Calu3 (cell line): ENCODE measurements at regions of chrX and their contacts with region 1.

Region 1: DNA sequence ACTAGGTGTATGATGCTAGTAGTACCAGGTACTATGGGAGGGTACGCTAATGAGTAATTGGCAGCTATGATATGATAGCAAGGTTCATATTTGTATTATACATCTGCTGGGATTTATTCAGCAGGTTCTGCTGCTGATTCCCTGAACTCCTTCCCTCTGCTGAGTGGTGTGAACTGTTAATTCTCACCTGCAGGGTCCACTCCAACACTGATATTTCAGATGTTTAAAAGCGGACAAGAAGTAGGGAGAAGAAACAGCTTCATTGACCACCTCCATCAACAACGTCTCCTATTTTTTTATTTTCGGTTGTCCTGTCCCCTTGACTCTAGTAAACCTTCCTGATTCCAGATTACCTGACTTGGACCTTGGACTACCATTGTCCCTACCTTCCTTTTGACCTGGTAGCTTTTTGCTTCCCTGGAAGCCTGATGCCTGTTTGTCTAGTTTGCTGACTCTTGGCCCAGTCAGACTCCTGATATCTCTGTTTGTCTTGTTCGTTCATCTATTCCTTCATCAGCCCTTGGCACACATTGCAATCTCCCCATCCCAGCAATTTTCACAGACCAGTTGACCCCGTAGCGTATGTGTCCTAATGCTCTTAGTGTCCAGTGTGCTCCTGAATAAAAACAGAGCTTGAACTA is 34.0 kb upstream of the RNF128 start:
- DNase-seq: peak; percentile 14
- H3K4me3 Mint-ChIP-seq: peak overlapping the region; percentile 66
- H3K27ac Mint-ChIP-seq: peak overlapping the region; percentile 78
- H3K4me1 Mint-ChIP-seq: peaks cover 28% of the 10 kb centered on the region
- H3K27me3 Mint-ChIP-seq: no peaks in the 10 kb centered on the region
- CTCF ChIP-seq: no peak

Region 2: DNA sequence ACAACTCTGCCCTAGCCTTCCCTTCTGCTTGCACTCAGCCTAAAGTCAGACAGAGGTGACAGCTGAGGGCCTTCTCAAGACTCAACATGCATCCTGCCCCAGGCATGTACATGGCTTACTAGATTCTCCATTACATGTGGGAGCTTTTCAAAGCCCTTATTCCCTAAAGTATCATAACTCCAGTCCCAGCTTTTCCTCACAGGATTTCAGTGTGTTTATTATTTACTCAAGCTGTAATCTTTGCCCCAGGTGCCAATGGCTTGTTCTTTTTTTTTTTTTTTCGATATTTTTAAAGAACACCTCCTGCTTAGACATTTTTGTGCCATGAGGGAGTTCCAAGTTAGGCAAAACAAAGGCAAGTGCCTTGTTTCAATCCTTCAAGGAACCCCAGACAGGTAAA is 234.7 kb before region 1 on chrX:
- CTCF ChIA-PET with region 1: no interaction called
- intact Hi-C with region 1: no loop called
- DNase-seq: no peak
- H3K4me3 Mint-ChIP-seq: no peak overlapping the region
- H3K27ac Mint-ChIP-seq: no peak overlapping the region
- H3K4me1 Mint-ChIP-seq: no peaks in the 10 kb centered on the region
- H3K27me3 Mint-ChIP-seq: peaks cover 16% of the 10 kb centered on the region
- CTCF ChIP-seq: no peak

Region 3: GRCh38 chrX:106611679-106612392 is 80.7 kb before region 1 on chrX and contains the start of gene RADX:
- CTCF ChIA-PET with region 1: no interaction called
- intact Hi-C with region 1: loop called (anchors 2 kb)
- DNase-seq: peak; percentile 74
- H3K4me3 Mint-ChIP-seq: peak within 1 kb of the TSS; percentile 69
- H3K27ac Mint-ChIP-seq: peak within 1 kb of the TSS; percentile 71
- H3K4me1 Mint-ChIP-seq: peaks cover 15% of the 10 kb centered on the region
- H3K27me3 Mint-ChIP-seq: no peaks in the 10 kb centered on the region
- CTCF ChIP-seq: no peak
- total RNA-seq, gene RADX: 3.4 and 4.3 TPM in 2 replicates

Region 4: DNA sequence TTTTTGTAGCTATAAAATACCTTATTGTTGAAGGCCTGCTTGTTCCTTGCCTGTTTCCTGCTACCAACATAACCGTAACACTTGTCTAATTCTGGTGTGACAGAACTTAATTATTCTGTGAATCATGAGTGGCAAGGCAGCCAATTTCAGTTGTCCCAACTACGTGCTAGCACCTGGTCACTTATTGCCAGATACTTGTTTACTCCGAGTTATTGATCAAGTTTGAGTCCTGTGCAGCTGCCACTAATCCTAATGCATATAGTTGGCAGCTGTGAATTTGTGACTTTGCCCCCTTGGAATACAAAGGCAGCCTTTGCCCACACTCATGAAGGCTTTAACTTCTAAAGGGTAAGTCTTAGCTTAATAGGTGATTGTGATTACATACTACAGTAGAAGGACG is 26.2 kb after region 1 on chrX:
- CTCF ChIA-PET with region 1: no interaction called
- intact Hi-C with region 1: no loop called
- DNase-seq: peak; percentile 8
- H3K4me3 Mint-ChIP-seq: peak overlapping the region; percentile 14
- H3K27ac Mint-ChIP-seq: peak overlapping the region; percentile 72
- H3K4me1 Mint-ChIP-seq: peaks cover 38% of the 10 kb centered on the region
- H3K27me3 Mint-ChIP-seq: no peaks in the 10 kb centered on the region
- CTCF ChIP-seq: no peak

Region 5: GRCh38 chrX:106730401-106730800 is 37.9 kb after region 1 on chrX:
- CTCF ChIA-PET with region 1: interaction called, 9 read pairs
- intact Hi-C with region 1: loop called (anchors 2 kb)
- DNase-seq: no peak
- H3K4me3 Mint-ChIP-seq: peak overlapping the region; percentile 91
- H3K27ac Mint-ChIP-seq: peak overlapping the region; percentile 35
- H3K4me1 Mint-ChIP-seq: peaks cover 15% of the 10 kb centered on the region
- H3K27me3 Mint-ChIP-seq: no peaks in the 10 kb centered on the region
- CTCF ChIP-seq: no peak

Region 6: DNA sequence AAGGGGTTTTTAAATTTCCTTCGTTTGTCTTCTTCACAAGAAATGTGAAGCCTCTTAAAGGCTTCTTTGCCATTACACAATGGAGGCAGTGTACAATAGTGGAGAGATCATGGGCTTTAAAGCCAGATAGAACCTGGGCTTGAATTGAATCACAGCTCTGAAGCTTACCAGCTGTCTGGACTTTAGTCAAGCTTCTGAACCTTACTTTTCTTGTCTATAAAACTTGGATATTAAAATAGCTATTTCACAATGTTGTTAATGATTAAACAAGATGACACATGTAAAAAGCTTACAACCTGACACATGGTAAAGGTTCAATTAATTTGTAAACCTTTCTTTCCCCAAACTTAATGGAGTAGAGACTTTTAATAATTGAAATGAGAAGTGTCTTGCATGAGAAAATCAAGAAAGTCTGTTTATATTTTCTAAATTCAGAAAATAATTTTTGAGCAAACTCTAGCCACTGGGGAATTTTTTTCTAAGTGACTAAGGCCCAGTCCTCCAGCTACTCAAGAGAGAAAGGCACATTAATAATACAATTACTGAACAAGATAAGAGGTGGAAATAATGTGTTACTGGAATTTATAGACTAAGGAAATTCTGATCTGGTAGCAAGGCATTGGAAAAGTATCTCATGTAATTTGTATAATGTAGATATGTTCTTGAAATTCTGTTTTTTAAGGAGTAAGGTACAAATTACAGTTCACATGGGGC is 88.3 kb after region 1 on chrX:
- CTCF ChIA-PET with region 1: no interaction called
- intact Hi-C with region 1: loop called (anchors 5 kb)
- DNase-seq: peak; percentile 15
- H3K4me3 Mint-ChIP-seq: peak overlapping the region; percentile 40
- H3K27ac Mint-ChIP-seq: peak overlapping the region; percentile 70
- H3K4me1 Mint-ChIP-seq: peaks cover 34% of the 10 kb centered on the region
- H3K27me3 Mint-ChIP-seq: no peaks in the 10 kb centered on the region
- CTCF ChIP-seq: no peak

Region 7: GRCh38 chrX:106891762-106892460 is 199.4 kb after region 1 on chrX:
- CTCF ChIA-PET with region 1: no interaction called
- intact Hi-C with region 1: no loop called
- DNase-seq: no peak
- H3K4me3 Mint-ChIP-seq: no peak overlapping the region
- H3K27ac Mint-ChIP-seq: no peak overlapping the region
- H3K4me1 Mint-ChIP-seq: peaks cover 31% of the 10 kb centered on the region
- H3K27me3 Mint-ChIP-seq: no peaks in the 10 kb centered on the region
- CTCF ChIP-seq: no peak